CD14-positive monocyte (primary cell): ENCODE measurements at regions of chr2 and their contacts with region 1.

Region 1: DNA sequence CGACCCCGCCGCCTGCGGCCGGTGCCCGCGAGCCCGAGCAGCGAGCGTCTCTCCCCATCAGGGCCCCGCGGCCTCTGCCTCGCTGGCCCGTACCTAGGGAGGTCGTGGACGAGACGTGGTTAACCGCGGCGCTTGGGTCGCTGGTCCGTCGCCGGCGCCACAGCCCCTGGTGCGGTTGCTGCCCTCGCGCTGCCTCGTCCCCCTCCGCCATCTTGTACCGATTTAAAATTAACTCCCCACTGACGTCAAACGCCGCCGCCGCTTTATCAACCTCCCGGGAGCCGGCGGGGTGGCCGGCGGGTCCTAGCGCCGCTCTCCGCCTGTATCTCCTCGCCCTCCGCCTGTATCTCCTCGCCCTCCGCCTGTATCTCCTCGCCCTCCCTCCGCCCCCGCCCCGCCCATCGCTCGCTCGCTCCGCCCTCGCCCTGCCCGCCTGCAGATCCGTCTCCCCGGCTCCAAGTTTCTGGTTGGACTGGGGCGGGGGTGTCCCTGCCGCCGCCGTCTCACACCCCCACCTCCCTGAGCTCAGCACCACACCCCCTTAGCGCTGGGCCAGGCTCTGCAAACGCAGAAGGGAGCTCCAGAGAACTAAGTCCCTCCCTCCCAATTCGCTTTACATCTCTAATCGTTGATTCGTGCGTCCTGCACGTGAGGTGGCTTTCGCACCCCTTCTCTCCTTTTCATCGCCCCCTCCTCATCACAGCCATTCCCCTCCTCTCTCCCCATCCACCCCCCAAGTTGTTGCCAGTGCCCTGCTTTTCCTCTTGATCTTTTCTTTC is at the start of gene ATL2:
- DNase-seq: peak; percentile 89 to 92 (median 89)
- H3K4me3 ChIP-seq: peak within 1 kb of the TSS; percentile 87 to 91 (median 88)
- H3K4me3 Mint-ChIP-seq: peak within 1 kb of the TSS; percentile 88 to 97
- H3K27ac ChIP-seq: peak within 1 kb of the TSS; percentile 91 to 92
- H3K27ac Mint-ChIP-seq: peak within 1 kb of the TSS; percentile 87 to 95 (median 93)
- H3K4me1 ChIP-seq: peaks cover 45 to 51% of the 10 kb centered on the region in 2 donors
- H3K4me1 Mint-ChIP-seq: peaks cover 45% of the 10 kb centered on the region
- H3K27me3 ChIP-seq: no peaks in the 10 kb centered on the region
- H3K27me3 Mint-ChIP-seq: no peaks in the 10 kb centered on the region
- CTCF ChIP-seq: no peak
- polyA plus RNA-seq, gene ATL2: 7.8 to 28.3 (median 10.8) TPM

Region 2: DNA sequence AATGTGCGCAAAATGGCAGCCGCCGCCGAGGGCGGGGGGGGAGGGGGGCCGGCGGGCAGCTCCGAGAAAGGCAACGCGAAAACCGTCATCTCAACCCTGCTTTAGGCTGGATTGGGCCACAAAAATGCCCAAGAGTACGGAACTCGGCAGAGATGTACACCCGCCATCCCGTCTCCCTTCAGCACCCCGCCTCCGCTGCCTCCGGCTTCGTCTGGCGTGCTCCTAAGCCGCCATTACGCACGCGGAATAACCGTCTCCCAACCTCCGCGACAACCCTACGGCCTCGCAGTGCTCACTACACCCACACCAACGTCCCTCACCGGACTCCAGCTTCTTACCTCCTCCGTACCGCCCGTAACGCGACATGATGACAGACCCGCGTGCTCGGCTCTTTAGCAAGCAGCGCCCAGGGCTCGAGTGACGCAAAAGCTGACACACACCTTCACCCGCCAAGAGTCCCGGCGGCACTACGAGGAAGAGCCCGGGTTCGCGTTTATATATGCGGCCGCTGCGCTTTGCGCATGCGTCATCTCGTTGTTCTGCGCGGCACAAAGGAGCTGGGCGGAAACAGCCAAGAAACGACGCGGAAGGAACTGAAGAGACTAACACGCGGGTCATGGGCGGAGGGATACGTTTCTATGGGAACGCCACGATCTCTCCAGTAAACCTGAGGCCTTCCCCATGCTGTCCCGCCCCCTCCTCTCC is 373.8 kb after region 1 on chr2 and contains the start of gene SRSF7:
- intact Hi-C with region 1: loop called in 1 of 2 experiments (anchors 2 kb)
- DNase-seq: peak; percentile 98 to 99 (median 98)
- H3K4me3 ChIP-seq: peak within 1 kb of the TSS; percentile 76 to 99 (median 84)
- H3K4me3 Mint-ChIP-seq: peak within 1 kb of the TSS; percentile 99 to 100
- H3K27ac ChIP-seq: peak within 1 kb of the TSS; percentile 92 to 97
- H3K27ac Mint-ChIP-seq: peak within 1 kb of the TSS; percentile 92 to 99 (median 97)
- H3K4me1 ChIP-seq: peaks cover 39 to 46% of the 10 kb centered on the region in 2 donors
- H3K4me1 Mint-ChIP-seq: peaks cover 42% of the 10 kb centered on the region
- H3K27me3 ChIP-seq: no peaks in the 10 kb centered on the region
- H3K27me3 Mint-ChIP-seq: peaks cover 0 to 3% (median 0%) of the 10 kb centered on the region in 3 donors
- CTCF ChIP-seq: no peak
- polyA plus RNA-seq, gene SRSF7: 226 to 299 (median 246) TPM